MCF 10A (cell line): ENCODE measurements at regions of chrX and their contacts with region 1.

Region 1: GRCh38 chrX:13658602-13659001 is 5.7 kb downstream of the TCEANC start:
- DNase-seq: peak; percentile 79
- H3K4me3 Mint-ChIP-seq: no peak overlapping the region
- H3K27ac Mint-ChIP-seq: peak overlapping the region; percentile 23
- H3K4me1 Mint-ChIP-seq: peaks cover 10% of the 10 kb centered on the region
- H3K27me3 Mint-ChIP-seq: peaks cover 12% of the 10 kb centered on the region
- CTCF ChIP-seq: peak; percentile 66

Region 2: GRCh38 chrX:13669246-13669737 is 10.7 kb after region 1 on chrX:
- CTCF ChIA-PET with region 1: interaction called, 4 read pairs
- POLR2A ChIA-PET with region 1: interaction called, 13 read pairs
- intact Hi-C with region 1: no loop called
- DNase-seq: peak; percentile 99
- H3K4me3 Mint-ChIP-seq: peak overlapping the region; percentile 41
- H3K27ac Mint-ChIP-seq: peak overlapping the region; percentile 90
- H3K4me1 Mint-ChIP-seq: no peaks in the 10 kb centered on the region
- H3K27me3 Mint-ChIP-seq: peaks cover 22% of the 10 kb centered on the region
- CTCF ChIP-seq: no peak

Region 3: GRCh38 chrX:13699183-13699826 is 40.7 kb after region 1 on chrX:
- CTCF ChIA-PET with region 1: interaction called, 3 read pairs
- POLR2A ChIA-PET with region 1: interaction called, 18 read pairs
- intact Hi-C with region 1: no loop called
- DNase-seq: peak; percentile 61
- H3K4me3 Mint-ChIP-seq: no peak overlapping the region
- H3K27ac Mint-ChIP-seq: no peak overlapping the region
- H3K4me1 Mint-ChIP-seq: peaks cover 40% of the 10 kb centered on the region
- H3K27me3 Mint-ChIP-seq: no peaks in the 10 kb centered on the region
- CTCF ChIP-seq: no peak

Region 4: DNA sequence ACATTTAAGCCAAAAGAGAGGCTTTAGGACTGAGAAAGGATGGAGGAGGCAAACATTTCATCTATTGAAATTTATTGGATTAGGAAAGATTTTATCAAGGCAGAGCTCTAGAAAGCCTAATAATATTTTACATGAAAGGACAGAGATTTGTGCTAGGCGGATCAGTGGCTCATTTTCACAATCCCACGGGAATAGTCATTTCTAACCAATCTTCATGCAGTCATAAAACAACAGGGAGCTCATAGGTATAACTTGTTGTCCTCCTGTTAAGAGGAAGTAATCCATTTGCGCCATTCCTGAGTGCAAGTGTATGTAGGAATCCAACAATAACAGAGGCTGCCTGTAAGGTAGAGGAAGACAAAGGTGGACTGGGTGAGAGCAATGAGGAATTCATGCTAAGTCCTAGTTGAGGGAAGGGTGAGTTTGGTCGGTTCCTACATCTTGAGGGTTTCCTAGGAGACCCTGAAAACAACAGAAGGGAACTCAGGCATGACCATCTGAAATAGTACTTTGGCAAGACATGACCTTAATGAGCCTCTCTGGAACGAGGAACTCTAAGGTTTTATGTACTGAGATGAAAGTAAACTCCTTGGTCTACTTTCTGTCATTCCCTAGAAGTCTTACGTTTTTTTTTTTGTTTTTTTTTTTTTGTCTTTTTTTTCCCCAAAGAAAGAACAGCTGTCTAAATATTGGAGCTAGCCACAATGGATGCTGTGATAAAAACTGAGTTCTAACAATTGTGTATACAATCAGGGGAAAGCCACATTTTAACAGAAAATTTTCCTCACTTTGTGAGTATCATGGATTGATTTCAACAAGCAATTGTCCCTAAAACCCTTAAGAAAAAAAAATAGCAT is 281.4 kb after region 1 on chrX:
- CTCF ChIA-PET with region 1: no interaction called
- POLR2A ChIA-PET with region 1: no interaction called
- intact Hi-C with region 1: no loop called
- DNase-seq: no peak
- H3K4me3 Mint-ChIP-seq: no peak overlapping the region
- H3K27ac Mint-ChIP-seq: no peak overlapping the region
- H3K4me1 Mint-ChIP-seq: no peaks in the 10 kb centered on the region
- H3K27me3 Mint-ChIP-seq: peaks cover 58% of the 10 kb centered on the region
- CTCF ChIP-seq: no peak